Right cardiac atrium (tissue), 5 donors: ENCODE measurements at regions of chr18 and their contacts with region 1.

Region 1: GRCh38 chr18:62131301-62131909 is 55.5 kb downstream of the PIGN start:
- DNase-seq: peak in 2 of 3 donors; percentile 39 to 53
- ATAC-seq: peak in 1 of 2 donors; percentile 64
- H3K4me3 ChIP-seq: no peak overlapping the region
- H3K27ac ChIP-seq: no peak overlapping the region
- H3K4me1 ChIP-seq: no peaks in the 10 kb centered on the region
- H3K27me3 ChIP-seq: no peaks in the 10 kb centered on the region

Region 2: DNA sequence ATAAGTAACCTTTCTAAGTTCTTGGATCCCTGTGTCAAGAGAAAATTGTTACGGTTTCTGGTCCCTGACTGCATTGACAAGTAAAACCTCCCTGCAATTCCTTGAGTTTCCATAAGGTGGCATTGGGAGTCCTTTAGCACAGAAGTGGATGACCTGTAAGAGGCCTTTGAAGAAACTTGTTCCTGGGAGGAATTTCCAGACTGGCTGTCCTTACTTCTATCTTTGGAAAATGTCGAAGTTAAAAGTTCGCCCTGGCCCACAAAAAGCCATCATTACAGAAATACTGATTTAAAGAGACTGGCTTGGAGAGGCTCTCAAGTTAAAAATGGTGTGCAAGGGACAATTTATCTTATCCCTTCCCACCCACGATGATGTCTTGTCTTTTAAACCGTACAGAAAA is 579.8 kb before region 1 on chr18:
- intact Hi-C with region 1: loop called in 2 of 4 experiments (anchors 5 to 10 kb)
- DNase-seq: no peak
- ATAC-seq: peak; percentile 74 to 76
- H3K4me3 ChIP-seq: no peak overlapping the region
- H3K27ac ChIP-seq: no peak overlapping the region
- H3K4me1 ChIP-seq: no peaks in the 10 kb centered on the region
- H3K27me3 ChIP-seq: no peaks in the 10 kb centered on the region

Region 3: DNA sequence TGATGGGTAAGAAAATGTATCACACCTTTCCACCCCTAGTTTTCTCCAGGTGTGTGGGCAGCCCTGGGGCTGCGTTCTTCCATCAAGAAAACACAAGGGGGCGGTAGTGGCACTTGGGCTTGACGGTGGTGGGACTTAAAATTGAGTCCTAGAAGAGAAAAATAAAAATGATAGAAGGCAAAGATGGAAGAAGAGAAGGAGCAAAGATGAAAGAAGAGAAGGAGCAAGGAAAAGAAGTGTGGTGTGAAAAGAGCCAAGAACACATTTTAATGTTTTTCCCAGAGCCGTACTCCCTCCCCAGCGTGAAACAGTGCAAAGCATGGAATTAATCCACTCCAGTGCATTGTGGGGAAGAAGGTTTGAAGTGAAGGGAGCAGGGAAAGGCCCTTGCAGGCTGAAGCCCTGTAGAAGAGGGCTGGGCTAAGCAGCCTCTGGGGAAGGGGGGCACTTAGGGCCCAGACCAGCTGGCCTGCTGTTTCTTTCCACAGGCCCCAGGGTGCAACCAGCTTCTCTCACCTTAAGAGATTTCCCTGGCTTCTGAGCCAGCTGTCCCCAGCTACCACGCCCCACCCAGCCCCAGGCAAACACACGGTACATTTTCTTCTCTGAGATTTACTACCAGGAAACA is 495.4 kb before region 1 on chr18:
- intact Hi-C with region 1: loop called in 3 of 4 experiments (anchors 5 to 10 kb)
- DNase-seq: peak; percentile 21 to 74 (median 62)
- ATAC-seq: peak; percentile 76 to 85
- H3K4me3 ChIP-seq: no peak overlapping the region
- H3K27ac ChIP-seq: no peak overlapping the region
- H3K4me1 ChIP-seq: no peaks in the 10 kb centered on the region
- H3K27me3 ChIP-seq: no peaks in the 10 kb centered on the region

Region 4: DNA sequence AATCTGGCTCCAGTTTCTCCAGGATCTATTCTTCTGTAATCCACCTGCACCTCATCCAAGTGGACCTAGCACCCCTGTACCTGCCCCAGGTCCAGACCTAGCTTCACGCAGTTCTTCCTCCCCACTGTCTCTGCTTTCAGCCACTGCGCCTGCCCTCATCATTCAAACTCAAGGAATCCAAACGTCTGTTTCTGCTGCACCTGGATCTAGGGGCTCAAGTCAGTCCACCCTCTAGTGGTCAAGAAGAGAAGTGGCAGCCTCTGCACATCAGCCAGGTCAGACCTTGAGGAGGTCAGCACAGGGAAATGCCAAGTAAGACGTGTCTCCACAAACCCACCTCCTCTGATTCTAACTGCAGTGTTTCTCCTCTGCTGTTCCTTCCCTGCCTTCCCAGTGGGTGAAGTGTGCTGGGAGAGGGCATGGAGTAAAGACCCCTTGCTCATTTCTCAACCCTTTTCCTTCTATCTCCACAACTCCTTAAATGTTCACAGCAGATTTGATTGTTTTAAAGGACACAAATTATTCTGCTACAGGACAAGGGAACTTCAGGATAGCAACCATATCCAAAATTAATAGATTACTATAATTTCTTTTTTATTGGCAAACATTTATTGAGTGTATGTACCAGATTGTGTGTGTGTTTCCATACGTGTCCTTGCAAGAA is 229.9 kb before region 1 on chr18:
- intact Hi-C with region 1: loop called in 2 of 4 experiments (anchors 10 kb)
- DNase-seq: peak in 1 of 3 donors; percentile 52
- ATAC-seq: peak; percentile 77 to 84
- H3K4me3 ChIP-seq: no peak overlapping the region
- H3K27ac ChIP-seq: no peak overlapping the region
- H3K4me1 ChIP-seq: no peaks in the 10 kb centered on the region
- H3K27me3 ChIP-seq: no peaks in the 10 kb centered on the region